Left colon (tissue), 2 donors: ENCODE measurements at regions of chr3 and their contacts with region 1.

Region 1: GRCh38 chr3:94062431-94063404 is at the starts of genes DHFR2 and NSUN3:
- DNase-seq: peak; percentile 91 to 96
- ATAC-seq: peak; percentile 92
- total RNA-seq, gene DHFR2: 6.6 to 7.8 TPM
- total RNA-seq, gene NSUN3: 20.0 to 21.9 TPM

Region 2: GRCh38 chr3:93979833-93980676 is 82.7 kb before region 1 on chr3 and contains the start of gene ARL13B:
- intact Hi-C with region 1: loop called in 1 of 2 experiments (anchors 10 kb)
- DNase-seq: peak; percentile 96 to 98
- ATAC-seq: peak; percentile 99
- total RNA-seq, gene ARL13B: 1.7 to 4.1 TPM

Region 3: DNA sequence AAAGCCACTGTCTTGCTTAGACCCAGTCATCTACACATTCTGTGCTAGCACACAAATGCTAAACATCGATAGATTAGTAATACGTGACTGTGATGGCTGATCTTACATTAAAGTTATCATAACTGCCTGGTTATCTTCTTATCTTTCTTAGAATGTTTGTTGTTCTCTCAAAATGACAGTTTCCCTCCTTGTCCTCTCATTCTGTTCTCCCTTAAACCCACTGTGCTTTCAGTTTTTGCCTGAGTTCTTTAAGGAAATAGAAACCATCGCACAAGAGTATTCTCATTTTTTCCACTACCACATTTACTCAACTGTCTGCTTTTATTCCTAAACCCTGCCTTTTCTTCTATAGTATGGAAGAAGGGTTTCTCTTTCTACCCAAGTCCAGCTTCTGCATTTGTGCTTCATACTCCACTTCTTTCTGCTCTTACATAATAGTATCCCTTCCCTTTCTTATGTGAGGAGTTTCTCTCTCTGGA is 51.4 kb before region 1 on chr3:
- intact Hi-C with region 1: loop called in 1 of 2 experiments (anchors 10 kb)
- DNase-seq: no peak
- ATAC-seq: no peak

Region 4: GRCh38 chr3:94101851-94102250 is 39.1 kb after region 1 on chr3:
- intact Hi-C with region 1: no loop called
- DNase-seq: no peak
- ATAC-seq: no peak

Region 5: DNA sequence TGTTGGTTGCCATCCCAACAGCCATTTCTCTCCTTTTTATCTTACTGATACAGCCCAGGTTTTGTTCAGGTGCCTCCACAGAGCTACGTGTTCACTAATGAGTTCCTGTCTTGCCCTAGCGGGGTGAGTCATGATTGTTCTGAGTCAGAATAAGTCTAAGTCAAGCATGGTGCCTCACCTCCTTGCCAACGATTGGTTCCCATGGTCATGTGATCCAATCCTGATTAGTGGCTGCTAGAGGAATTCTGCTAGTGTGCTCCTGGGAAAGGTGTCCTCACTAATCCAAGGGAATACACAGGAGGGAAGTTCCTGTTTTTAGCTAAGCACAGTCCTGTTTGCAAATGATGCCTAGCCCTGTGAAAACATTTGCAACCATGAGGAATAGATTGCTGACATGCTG is 100.0 kb after region 1 on chr3:
- intact Hi-C with region 1: no loop called
- DNase-seq: no peak
- ATAC-seq: no peak

Region 6: GRCh38 chr3:94249585-94249984 is 186.9 kb after region 1 on chr3:
- intact Hi-C with region 1: no loop called
- DNase-seq: peak; percentile 39 to 81
- ATAC-seq: peak; percentile 67